ENCODE measurements at regions of chr11 and their contacts with region 1.

Region 1: DNA sequence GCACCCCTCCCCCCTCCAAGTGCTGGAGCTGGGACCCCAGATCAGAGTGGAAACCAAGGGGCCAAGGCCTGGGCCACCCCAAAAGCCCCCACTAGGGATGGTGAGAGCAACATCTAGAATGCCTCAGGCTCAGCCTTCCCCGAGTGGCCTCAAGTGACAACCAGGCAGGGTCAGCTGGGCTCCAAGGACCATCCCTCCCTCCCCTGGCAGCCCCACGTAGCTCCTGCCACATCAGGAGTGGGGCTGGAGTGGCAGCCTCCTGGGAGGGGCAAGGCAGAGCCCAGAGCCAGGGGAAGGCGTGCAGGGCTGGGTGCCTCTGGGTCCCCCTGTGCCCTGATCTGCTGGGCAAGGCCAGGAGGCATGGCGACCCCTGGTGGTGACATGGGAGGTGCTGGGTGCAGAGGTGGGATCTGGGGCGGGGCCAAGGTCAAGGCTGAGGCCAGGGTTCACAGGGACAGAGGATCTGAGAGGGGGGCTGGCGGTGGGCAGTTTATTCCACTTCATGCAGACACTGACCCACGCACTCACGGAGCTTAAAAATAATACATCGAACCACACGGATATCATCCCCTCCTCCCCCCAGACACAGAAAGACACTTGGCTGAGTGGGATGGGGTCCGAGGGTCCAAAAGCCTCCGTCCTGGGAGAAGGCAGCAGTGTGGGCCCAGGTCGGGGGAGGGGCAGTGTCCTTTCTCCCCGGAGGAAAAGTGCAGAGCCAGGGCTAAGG is 15.8 kb upstream of the EHD1 start:
- DNase-seq: peak; percentile 95
- ATAC-seq: peak; percentile 86

Region 2: DNA sequence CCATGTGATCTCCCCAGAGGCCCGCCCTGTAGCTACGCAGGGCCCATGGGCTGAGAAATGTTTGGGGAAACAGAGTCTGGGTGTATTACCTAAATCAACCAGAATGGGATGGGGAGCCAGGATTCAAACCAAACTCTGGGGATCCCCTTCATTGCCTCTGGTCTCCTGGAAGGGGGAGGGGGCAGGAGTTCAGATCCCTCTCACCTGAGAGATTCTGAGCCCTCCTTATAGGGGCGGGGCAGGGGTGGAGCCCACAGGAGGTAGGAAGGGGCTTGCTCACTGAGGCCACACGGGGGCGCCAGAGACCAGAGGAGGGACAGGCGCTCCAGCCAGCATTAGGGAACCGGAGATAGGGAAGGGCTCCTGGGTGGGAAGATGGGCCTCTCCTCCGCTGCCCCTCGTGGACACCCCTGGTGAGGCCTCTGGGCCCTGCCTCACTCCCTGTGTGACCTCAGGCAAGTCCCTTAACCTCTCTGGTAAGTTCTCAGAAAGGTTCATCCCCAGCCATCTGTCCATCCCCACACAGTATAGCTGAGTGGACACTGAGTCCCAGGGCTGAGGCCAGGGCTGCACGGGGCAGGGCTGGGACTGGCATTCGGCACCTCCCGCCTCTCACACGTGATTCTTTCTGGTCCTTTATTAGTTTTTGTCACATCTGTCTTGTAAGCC is 47.1 kb before region 1 on chr11:
- intact Hi-C with region 1: loop called (anchors 2 kb)
- DNase-seq: peak; percentile 95
- ATAC-seq: peak; percentile 87

Measured in left ventricle myocardium superior (tissue), 1 donor.